ENCODE measurements at regions of chr14 and their contacts with region 1.

Region 1: GRCh38 chr14:96349286-96350075 is 13.7 kb downstream of the ATG2B start:
- DNase-seq: no peak
- ATAC-seq: peak; percentile 31 to 35
- H3K4me3 ChIP-seq: no peak overlapping the region
- H3K27ac ChIP-seq: no peak overlapping the region
- H3K4me1 ChIP-seq: no peaks in the 10 kb centered on the region
- H3K27me3 ChIP-seq: no peaks in the 10 kb centered on the region

Region 2: GRCh38 chr14:96297000-96297399 is 52.5 kb before region 1 on chr14:
- intact Hi-C with region 1: loop called in 1 of 4 experiments (anchors 10 kb)
- DNase-seq: no peak
- ATAC-seq: no peak
- H3K4me3 ChIP-seq: no peak overlapping the region
- H3K27ac ChIP-seq: no peak overlapping the region
- H3K4me1 ChIP-seq: no peaks in the 10 kb centered on the region
- H3K27me3 ChIP-seq: no peaks in the 10 kb centered on the region